ENCODE measurements at regions of chr6 and their contacts with region 1.

Region 1: GRCh38 chr6:13614926-13615798 is at the start of gene NOL7:
- DNase-seq: peak; percentile 96
- ATAC-seq: peak; percentile 93
- H3K4me3 Mint-ChIP-seq: peak within 1 kb of the TSS; percentile 96
- H3K27ac Mint-ChIP-seq: peak within 1 kb of the TSS; percentile 93
- H3K4me1 Mint-ChIP-seq: peaks cover 25% of the 10 kb centered on the region
- H3K27me3 Mint-ChIP-seq: no peaks in the 10 kb centered on the region
- CTCF ChIP-seq: peak; percentile 37
- total RNA-seq, gene NOL7: 65.3 to 76.1 TPM (median 66.5 TPM) in 3 replicates

Region 2: DNA sequence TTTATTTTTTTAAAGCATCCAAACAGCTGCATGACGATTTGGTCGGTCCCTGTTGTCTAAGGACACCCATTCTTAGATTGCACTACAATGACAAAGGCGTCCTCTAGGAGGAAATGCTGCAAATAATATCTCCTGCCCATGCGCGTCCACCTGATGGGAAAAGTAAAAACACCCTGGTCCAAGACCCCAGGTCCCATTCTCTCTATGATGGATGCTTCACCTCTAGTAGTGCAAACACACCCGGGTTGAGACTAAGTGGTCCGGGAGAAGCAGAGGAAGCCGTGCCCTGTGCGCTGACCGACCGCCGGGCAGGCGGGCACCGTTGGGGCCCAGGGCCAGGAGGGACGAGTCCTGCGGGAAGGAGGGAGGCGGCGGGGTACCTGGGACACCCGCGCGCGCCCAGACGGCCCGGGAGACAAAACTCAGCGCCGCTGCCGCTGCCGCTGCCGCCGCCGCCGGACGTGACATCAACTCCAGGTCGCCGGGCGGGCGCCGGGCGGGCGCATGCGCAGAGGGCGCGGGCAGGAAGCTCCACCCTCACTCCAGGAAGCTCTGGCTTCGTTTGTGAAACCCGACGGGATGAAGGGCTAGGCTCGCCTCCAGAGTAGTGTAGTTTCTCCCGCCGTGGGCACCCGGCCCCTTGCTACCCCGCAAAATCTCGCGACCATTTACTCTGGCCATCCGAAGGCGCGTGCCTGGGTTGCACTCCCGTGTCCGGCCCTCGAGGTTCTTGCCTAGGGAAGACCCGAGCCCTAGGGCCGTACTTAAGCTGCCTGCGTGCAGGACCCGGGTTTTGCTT is 286.9 kb before region 1 on chr6 and contains the start of gene TBC1D7:
- CTCF ChIA-PET with region 1: interaction called, 20 read pairs
- POLR2A ChIA-PET with region 1: interaction called, 12 read pairs
- DNase-seq: peak; percentile 93
- ATAC-seq: peak; percentile 88
- H3K4me3 Mint-ChIP-seq: peak within 1 kb of the TSS; percentile 89
- H3K27ac Mint-ChIP-seq: peak within 1 kb of the TSS; percentile 94
- H3K4me1 Mint-ChIP-seq: peaks cover 22% of the 10 kb centered on the region
- H3K27me3 Mint-ChIP-seq: no peaks in the 10 kb centered on the region
- CTCF ChIP-seq: no peak
- total RNA-seq, gene TBC1D7: 44.9 to 47.6 TPM (median 45.3 TPM) in 3 replicates

Region 3: GRCh38 chr6:13368731-13369115 is 246.4 kb before region 1 on chr6:
- CTCF ChIA-PET with region 1: no interaction called
- POLR2A ChIA-PET with region 1: no interaction called
- DNase-seq: no peak
- ATAC-seq: no peak
- H3K4me3 Mint-ChIP-seq: no peak overlapping the region
- H3K27ac Mint-ChIP-seq: no peak overlapping the region
- H3K4me1 Mint-ChIP-seq: peaks cover 25% of the 10 kb centered on the region
- H3K27me3 Mint-ChIP-seq: no peaks in the 10 kb centered on the region
- CTCF ChIP-seq: no peak

Region 4: DNA sequence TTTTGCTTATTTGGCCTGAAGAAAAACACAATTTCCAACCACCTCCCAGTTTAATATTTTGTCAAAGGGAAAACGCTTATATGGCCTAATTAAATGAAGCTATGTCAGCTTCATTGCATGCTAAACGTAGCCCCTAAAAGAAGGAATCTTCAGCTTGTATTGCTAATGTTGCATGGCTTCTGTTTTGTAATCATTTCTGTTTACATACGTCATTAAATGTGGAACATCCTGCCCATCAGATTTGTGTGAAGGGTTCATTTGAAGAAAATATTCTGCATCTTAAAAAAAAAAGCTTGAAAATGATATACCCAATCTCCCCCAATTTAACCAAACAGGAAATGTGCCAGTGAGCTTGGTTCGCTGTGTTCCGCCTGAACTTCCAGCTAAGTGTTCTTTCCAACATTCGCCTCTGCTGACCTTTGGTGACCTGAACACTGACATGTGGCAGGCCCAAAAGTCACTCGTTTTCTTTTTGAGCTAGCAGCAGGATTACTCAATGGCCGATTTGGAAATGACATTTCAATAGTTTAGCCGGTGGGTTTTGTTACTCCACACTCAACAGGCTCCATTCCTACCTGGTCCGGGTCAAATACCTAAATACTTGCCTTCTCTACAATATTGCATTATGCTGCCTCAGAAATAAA is 53.4 kb before region 1 on chr6:
- CTCF ChIA-PET with region 1: interaction called, 10 read pairs
- POLR2A ChIA-PET with region 1: interaction called, 3 read pairs
- DNase-seq: no peak
- ATAC-seq: no peak
- H3K4me3 Mint-ChIP-seq: no peak overlapping the region
- H3K27ac Mint-ChIP-seq: no peak overlapping the region
- H3K4me1 Mint-ChIP-seq: peaks cover 31% of the 10 kb centered on the region
- H3K27me3 Mint-ChIP-seq: no peaks in the 10 kb centered on the region
- CTCF ChIP-seq: no peak

Region 5: DNA sequence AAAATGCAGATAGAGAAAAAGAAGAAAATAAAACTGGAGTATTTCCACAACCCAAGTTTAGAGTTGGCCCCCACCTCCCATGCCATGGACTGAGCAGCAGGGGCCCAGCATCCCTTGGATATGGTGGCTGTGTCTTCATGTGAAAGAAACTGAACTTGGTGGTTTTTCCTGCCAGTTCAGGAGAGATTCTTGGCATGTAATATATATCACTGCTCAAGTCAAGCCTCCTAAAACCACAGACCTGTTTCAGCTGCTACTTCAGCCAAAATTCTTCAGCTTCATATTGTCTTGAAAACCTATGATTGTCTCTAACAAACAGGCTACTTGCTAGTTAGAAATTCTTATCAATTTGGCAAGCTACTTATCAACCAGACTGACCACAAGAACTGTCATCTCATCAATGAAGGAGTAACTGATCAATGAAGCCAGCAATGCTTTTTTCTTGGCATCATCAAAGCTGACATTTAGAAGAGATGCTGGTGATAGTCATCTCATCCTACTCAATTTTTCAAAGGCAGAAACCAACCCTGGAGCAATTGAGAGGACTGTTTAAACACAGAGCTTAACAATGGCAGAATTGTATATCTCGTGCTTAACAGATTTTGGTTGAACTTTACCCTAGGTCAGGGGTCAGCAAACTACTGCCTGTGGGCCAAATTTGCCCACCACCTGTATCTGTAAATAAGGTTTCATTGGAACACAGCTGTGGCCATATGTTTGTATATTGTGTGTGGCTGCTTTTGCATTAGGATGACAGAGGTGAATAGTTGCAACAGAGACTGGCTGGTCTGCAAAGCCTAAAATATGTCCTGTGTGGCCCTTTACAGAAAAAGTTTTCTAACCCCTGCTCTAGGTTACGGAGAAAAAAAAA is 10.4 kb before region 1 on chr6:
- CTCF ChIA-PET with region 1: interaction called, 14 read pairs
- POLR2A ChIA-PET with region 1: interaction called, 3 read pairs
- DNase-seq: no peak
- ATAC-seq: no peak
- H3K4me3 Mint-ChIP-seq: no peak overlapping the region
- H3K27ac Mint-ChIP-seq: no peak overlapping the region
- H3K4me1 Mint-ChIP-seq: no peaks in the 10 kb centered on the region
- H3K27me3 Mint-ChIP-seq: no peaks in the 10 kb centered on the region
- CTCF ChIP-seq: no peak

Region 6: GRCh38 chr6:13635948-13636658 is 20.9 kb after region 1 on chr6:
- CTCF ChIA-PET with region 1: interaction called, 14 read pairs
- POLR2A ChIA-PET with region 1: interaction called, 4 read pairs
- DNase-seq: no peak
- ATAC-seq: peak; percentile 85
- H3K4me3 Mint-ChIP-seq: no peak overlapping the region
- H3K27ac Mint-ChIP-seq: peak overlapping the region; percentile 90
- H3K4me1 Mint-ChIP-seq: peaks cover 54% of the 10 kb centered on the region
- H3K27me3 Mint-ChIP-seq: no peaks in the 10 kb centered on the region
- CTCF ChIP-seq: no peak

Measured in WTC11 (cell line).